ENCODE measurements at regions of chr19 and their contacts with region 1.

Region 1: DNA sequence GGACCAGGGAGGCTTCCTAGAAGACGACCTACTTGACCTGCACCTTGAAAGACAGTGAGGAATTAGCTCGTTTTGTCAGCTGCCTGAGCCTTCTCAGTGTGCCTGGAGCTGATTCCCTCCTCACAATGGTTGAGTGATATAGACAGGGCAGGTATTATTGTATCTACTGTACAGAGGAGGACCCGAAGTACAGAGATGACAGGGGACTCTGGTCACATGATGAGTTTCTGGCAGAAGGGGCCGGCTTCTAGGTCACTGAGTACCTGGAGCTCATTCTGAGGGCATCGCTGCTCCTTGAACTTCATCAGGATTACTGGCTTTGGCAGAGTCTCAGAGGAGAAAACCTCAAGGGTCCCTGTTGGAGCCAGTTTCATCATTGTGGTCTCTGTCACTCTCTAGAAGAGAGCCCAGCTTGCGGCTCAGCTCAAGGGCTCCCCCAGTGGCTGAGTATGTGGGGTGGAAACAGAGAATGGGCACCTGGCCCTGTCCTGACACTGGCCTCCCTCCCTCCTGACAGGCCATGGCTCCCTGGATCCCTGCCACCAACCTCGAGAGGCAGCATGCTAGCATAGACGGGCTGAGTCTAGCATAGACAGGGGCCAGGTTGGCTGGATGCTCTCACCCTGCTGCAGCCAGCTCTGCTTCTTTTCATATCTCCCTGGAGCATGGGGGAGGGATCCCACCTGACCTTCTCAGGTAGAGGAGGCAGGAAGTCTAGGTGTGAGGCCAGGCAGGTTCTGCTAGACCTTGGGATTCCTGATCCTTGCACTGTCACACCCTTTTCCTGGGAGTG is 38.7 kb downstream of the NFIX start:
- DNase-seq: peak; percentile 79
- CTCF ChIP-seq: peak; percentile 69

Region 2: DNA sequence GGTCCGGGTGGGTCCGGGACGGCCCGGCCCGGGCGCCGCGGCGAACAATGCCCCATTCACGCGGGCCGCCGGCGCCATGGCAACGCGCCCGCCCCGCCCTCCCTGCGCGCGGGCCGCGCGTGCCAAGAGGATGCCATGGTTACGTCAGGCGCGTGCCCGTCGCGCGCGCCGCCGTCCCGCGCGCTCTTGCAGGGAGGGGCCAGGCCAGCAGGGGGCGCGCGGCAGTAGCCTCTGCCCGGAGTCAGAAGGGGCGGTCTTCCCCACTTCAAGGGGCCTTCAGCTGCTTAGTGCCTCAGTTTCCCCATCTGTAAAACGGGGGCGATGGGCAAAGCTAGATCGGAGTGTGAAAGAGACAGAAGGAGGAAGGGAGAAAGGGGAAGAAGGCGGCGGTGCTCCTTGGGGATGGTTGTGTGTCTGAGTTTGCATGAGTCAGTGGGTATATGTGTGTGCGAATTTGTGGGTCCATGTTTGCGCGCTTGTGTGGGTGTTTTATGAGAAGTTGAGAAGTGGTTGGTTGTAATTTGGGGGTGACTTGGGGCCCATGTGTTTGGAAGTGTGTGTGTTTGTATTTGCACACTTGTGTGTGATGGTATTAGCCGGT is 50.4 kb before region 1 on chr19:
- CTCF ChIA-PET with region 1: interaction called, 98 read pairs
- POLR2A ChIA-PET with region 1: no interaction called
- DNase-seq: peak; percentile 88
- CTCF ChIP-seq: peak; percentile 95

Region 3: GRCh38 chr19:13022859-13023636 is 11.0 kb before region 1 on chr19:
- CTCF ChIA-PET with region 1: interaction called, 13 read pairs
- POLR2A ChIA-PET with region 1: no interaction called
- DNase-seq: peak; percentile 56
- CTCF ChIP-seq: no peak

Region 4: DNA sequence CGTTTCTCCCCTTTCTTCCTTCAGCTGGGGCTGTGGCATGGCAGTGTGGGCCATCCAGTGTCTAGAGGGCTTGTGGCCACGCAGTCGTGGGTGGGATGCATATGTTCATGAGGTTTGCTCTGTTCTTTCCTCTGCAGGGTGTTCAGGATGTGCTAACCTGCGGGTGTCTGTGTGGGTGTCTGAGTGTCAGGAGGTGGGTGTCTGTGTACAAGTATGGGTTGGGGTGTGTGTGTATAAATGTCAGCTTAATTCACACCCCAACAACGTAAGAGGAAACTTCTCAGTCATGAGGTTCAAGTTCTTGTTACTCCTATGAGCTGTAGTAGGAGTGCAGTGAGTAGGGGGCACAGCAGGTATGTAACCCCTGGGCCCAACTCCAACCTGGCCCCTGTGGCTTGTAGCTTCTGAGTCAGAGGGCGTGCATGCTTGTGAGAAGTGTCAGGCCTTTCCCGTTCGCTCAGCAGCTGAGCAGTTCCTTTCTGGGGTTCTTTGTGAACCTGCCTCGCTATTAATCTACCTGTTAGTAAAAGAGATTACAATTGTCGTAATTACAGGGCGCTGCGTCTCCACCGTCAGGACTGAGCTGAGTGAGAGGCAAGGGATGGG is 10.3 kb after region 1 on chr19:
- CTCF ChIA-PET with region 1: interaction called, 14 read pairs
- POLR2A ChIA-PET with region 1: no interaction called
- DNase-seq: no peak
- CTCF ChIP-seq: no peak

Region 5: GRCh38 chr19:13051267-13052165 is 17.5 kb after region 1 on chr19:
- CTCF ChIA-PET with region 1: interaction called, 16 read pairs
- POLR2A ChIA-PET with region 1: no interaction called
- DNase-seq: peak; percentile 40
- CTCF ChIP-seq: no peak

Measured in GM10248 (cell line).